Dorsolateral prefrontal cortex (tissue), 120 donors: ENCODE measurements at regions of chr19 and their contacts with region 1.

Region 1: GRCh38 chr19:57578487-57579205 is at the start of gene ZNF416:
- DNase-seq: peak; percentile 96 to 99 (median 98)
- H3K4me3 ChIP-seq: peak within 1 kb of the TSS; percentile 68 to 100 (median 97)
- H3K27ac ChIP-seq: peak within 1 kb of the TSS in 52 of 59 donors; percentile 14 to 87 (median 68)
- H3K27me3 ChIP-seq: no peaks in the 10 kb centered on the region
- CTCF ChIP-seq: peak in 53 of 56 donors; percentile 20 to 71 (median 46)
- total RNA-seq, gene ZNF416: 4.4 to 10.6 (median 7.8) TPM

Region 2: DNA sequence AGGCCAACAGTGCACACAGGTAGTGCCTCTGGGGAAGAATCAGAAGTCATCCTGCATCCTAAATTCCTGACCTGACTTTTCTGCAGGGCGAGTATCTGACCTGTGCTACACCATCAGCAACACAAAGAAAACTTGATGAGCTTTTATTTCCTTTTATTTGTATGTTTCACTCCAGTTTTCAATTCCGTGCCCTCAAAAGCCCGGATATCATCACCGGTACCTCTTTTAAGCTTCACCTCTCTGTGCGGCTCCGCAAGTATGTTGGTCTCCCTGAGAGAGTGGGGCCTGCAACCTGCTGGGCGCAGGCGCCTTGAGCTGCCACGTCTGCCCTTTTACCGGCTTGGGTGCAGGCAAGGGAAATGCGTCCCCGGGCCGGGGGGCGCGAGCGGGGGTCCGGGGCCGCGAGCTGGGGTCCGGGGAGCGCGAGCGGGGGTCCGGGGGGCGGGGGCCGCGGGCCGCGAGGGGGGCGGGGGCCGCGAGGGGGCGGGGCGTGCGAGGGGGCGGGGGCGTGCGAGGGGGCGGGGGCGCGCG is 407.0 kb before region 1 on chr19:
- intact Hi-C with region 1: no loop called
- DNase-seq: peak in 9 of 10 donors; percentile 22 to 70 (median 44)
- H3K4me3 ChIP-seq: peak overlapping the region in 57 of 59 donors; percentile 22 to 76 (median 50)
- H3K27ac ChIP-seq: peak overlapping the region in 46 of 59 donors; percentile 3 to 84 (median 55)
- H3K27me3 ChIP-seq: no peaks in the 10 kb centered on the region
- CTCF ChIP-seq: no peak

Region 3: GRCh38 chr19:57477191-57478008 is 101.2 kb before region 1 on chr19 and contains the start of gene ZNF772:
- intact Hi-C with region 1: loop called in 1 of 2 experiments (anchors 10 kb)
- DNase-seq: peak; percentile 86 to 98 (median 94)
- H3K4me3 ChIP-seq: peak within 1 kb of the TSS; percentile 53 to 95 (median 82)
- H3K27ac ChIP-seq: peak within 1 kb of the TSS; percentile 38 to 95 (median 85)
- H3K27me3 ChIP-seq: no peaks in the 10 kb centered on the region
- CTCF ChIP-seq: peak in 53 of 56 donors; percentile 15 to 78 (median 55)
- total RNA-seq, gene ZNF772: 18.4 to 50.7 (median 35.0) TPM

Region 4: DNA sequence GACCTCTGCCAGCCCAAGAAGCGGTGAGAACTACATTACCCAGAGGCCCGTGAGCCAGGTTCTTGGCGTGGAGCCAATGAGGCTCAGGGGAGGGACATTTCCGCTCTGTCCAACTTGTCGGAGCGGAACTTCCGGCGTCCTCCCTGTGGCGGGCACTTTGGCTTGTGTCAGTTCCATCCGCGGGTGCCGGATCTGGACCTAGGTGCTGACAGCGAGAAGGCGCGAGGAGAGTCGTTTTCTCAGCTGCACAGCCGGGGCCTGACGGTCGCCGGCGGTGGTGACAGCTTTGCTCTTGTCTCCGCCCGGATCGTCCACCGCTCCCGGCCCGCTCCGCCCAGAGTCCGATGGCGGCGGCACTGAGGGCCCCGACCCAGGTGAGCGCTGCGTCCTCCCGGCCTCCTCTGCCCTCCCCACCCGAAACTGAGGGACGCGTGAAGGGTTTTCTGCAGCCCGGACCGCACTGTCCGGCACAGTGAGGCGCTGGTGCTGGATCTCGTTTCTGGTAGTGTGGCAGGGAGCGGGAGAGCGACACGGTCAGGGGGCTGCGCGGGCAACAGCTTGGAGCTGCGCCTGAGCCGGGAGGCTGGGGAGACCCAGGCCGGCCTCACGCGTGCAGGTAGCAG is 21.2 kb after region 1 on chr19 and contains the start of gene ZNF530:
- intact Hi-C with region 1: loop called (anchors 1 to 2 kb)
- DNase-seq: peak; percentile 88 to 97 (median 94)
- H3K4me3 ChIP-seq: peak within 1 kb of the TSS; percentile 64 to 97 (median 85)
- H3K27ac ChIP-seq: peak within 1 kb of the TSS in 16 of 59 donors; percentile 10 to 62 (median 28)
- H3K27me3 ChIP-seq: no peaks in the 10 kb centered on the region
- CTCF ChIP-seq: peak in 43 of 56 donors; percentile 11 to 56 (median 32)
- total RNA-seq, gene ZNF530: 1.1 to 10.3 (median 4.1) TPM